ENCODE measurements at regions of chr11 and their contacts with region 1.

Region 1: GRCh38 chr11:1050581-1051355 is 14.2 kb upstream of the MUC6 start:
- DNase-seq: peak; percentile 84 to 92 (median 88)
- ATAC-seq: peak; percentile 96
- H3K4me3 ChIP-seq: no peak overlapping the region
- H3K27ac ChIP-seq: peak overlapping the region in 2 of 4 donors; percentile 24 to 55
- H3K4me1 ChIP-seq: peaks cover 19% of the 10 kb centered on the region
- H3K27me3 ChIP-seq: no peaks in the 10 kb centered on the region
- CTCF ChIP-seq: peak; percentile 91 to 99 (median 98)
- POLR2A ChIP-seq: no peak

Region 2: DNA sequence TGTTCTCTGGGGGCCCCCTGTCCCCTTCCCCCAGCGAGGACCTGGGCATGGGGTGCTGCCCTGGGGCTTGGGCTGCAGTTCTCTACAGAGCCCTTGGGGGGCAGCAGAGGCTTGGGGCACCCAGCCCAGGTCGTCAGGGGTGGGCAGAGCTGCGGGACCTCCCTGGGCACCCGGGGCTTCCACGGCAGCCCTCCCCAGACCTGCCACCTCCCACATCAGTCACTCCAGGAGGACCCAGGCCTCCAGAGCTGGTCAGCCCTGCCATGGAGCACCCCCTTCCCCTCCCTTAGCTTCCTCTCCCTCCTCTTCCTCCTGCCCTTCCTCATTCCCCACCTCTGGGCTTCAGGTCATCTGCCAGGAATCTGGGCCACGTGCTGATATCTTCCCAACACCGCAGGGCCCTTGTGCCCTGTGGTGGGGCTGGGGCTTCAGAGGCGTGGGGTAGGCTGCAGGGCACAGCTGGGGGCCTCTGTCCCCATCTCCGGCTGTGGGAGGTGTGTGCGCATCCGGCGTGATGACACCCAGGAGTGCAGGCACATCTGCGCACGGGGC is 202.3 kb before region 1 on chr11:
- intact Hi-C with region 1: loop called (anchors 2 kb)
- DNase-seq: peak in 3 of 4 donors; percentile 60 to 64 (median 64)
- ATAC-seq: peak; percentile 15
- H3K4me3 ChIP-seq: no peak overlapping the region
- H3K27ac ChIP-seq: no peak overlapping the region
- H3K4me1 ChIP-seq: peaks cover 56% of the 10 kb centered on the region
- H3K27me3 ChIP-seq: peaks cover 0 to 6% of the 10 kb centered on the region in 2 donors
- CTCF ChIP-seq: peak; percentile 80 to 97 (median 87)
- POLR2A ChIP-seq: no peak

Region 3: GRCh38 chr11:924406-925157 is 126.2 kb before region 1 on chr11:
- intact Hi-C with region 1: loop called (anchors 5 kb)
- DNase-seq: no peak
- ATAC-seq: no peak
- H3K4me3 ChIP-seq: no peak overlapping the region
- H3K27ac ChIP-seq: peak overlapping the region in 1 of 4 donors; percentile 89
- H3K4me1 ChIP-seq: peaks cover 25% of the 10 kb centered on the region
- H3K27me3 ChIP-seq: no peaks in the 10 kb centered on the region
- CTCF ChIP-seq: no peak
- POLR2A ChIP-seq: no peak